ENCODE measurements at regions of chr6 and their contacts with region 1.

Region 1: DNA sequence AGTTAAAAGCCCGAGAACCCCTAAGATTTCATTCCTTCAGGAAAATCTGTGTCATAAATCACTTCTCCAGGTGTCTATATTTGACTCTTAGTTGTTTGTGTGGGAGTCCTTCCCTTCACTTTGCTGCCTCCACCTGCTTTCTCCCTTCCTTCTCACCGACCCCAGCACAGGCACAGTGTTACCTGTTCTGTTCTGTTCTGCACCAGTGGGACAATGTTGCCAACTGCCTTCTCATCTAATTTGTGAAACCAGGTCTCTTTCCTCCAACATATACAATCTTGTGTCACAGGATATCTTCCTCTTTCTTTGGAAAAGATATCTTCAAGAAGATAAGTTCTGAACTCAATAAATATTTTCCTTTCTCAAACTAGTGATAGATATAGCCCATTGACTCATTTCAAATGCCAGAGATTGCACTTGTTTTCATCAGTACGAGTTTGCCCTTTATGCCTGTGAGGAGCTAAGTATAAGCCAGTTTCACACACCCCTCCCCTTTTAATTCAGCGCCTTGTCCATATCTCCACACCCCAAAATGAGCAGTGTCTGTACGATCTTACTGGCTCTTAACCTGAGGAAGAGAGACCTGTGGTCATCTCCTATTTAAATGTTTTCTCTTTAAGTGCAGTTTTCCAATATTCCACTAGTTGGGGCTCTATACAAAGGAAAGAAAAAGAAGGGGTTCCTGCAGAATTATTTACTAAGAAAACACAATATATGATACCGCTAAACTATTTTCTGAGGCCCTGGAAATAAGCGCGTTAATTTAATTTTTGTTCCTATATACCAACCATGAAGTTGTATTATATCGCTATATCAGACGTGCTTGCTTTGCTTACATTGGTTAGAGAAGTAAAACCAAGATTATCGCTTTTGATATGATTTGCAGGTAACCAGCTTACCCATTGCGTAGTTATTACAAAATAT is 81.6 kb upstream of the PREP start:
- DNase-seq: no peak
- CTCF ChIP-seq: peak; percentile 64

Region 2: DNA sequence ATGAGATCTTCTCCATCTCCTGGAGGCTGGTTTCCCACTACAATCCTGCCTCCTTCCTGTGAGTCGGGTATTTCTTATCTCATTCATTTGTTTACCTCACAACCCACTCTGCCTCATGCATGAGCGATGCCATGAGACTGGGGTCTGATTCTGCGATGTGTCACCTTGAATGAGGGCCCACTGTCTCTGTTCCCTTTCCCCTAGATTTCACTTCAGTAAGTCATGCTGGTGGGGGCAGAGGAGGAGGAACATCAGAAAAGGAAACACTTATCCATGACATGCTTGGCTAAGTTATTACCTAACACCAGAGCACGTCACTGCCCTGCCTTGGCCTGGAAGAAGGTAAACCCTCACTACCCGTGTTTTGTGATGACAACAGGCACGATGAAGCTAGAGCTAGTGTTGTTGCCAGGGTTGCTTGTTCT is 264.2 kb after region 1 on chr6:
- in situ Hi-C with region 1: loop called (anchors 10 kb)
- DNase-seq: no peak
- CTCF ChIP-seq: no peak

Region 3: DNA sequence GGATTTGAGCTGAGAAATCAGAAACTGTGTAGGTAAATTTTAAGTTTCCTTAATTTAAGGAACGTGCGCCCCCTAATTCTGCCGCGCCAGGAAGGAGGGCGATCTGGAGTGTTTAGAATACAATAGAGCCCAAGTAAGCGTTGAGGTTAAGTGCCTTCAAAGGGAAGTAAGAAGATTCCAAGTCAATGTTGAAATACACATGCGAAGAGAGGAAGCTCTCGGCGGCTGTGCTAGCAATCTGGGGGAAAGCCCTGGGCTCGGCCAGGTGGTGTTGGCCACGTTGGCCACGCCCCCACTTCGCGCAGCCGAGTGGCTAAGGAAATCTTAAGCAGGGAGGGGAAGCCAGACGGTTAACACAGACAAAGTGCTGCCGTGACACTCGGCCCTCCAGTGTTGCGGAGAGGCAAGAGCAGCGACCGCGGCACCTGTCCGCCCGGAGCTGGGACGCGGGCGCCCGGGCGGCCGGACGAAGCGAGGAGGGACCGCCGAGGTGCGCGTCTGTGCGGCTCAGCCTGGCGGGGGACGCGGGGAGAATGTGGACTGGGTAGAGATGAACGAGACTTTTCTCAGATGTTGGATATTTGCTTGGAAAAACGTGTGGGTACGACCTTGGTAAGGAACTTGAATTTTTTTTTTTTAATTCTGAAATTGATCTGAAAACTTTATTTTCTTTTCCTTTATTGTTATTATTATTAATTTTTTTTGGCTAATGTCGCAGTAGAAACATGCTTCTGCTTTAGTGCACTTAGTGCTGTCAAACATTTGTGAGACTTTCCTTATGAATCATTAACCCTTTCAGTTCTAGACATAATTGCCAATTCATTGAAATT is 601.7 kb after region 1 on chr6 and contains the start of gene PRDM1:
- in situ Hi-C with region 1: loop called (anchors 25 kb)
- DNase-seq: peak; percentile 81
- CTCF ChIP-seq: peak; percentile 14